ENCODE measurements at regions of chr20 and their contacts with region 1.

Region 1: DNA sequence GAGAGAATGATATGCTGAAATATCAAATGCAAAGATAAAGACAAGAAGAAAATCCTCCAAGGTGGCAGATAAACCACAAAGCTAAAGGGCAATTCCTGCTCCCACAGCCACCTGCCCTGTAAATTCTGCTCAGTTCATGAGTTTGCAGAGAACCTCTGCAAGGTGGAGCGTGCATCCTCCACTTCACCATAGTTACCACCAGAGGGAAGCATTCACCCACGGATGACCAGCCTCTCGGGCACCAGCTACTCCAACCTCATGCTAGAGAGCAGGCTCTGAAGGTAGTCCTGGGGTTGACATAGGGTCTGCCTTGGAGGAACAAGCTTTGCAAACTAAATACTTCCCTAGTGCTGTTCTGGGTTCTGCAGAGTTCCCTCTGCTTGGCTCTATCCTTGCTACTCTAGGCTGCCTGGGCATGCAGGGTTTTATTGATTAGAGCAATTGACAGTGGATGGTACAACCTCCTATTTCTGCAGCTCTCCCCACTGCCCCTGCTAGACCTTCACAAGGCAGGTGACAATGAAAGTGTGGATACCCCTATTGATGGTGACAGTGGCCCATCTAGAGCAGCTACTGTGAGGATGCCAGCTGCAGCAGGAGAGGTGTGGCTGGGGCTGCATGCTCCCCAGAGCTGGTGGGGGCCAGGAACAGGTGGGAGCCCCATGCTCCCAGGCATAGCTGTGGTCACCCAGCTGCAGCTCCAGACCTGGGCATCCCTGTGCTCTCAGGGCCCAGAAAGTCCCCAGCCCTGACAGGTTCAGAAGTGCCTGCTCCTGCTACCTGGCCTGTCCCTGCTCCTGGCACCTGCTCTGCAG is 51.1 kb downstream of the GGTLC1 start:
- DNase-seq: peak; percentile 77
- H3K4me3 Mint-ChIP-seq: no peak overlapping the region
- H3K27ac Mint-ChIP-seq: no peak overlapping the region
- H3K4me1 Mint-ChIP-seq: no peaks in the 10 kb centered on the region
- H3K27me3 Mint-ChIP-seq: peaks cover 11% of the 10 kb centered on the region

Region 2: GRCh38 chr20:23955896-23956295 is 18.4 kb after region 1 on chr20:
- CTCF ChIA-PET with region 1: no interaction called
- DNase-seq: no peak
- H3K4me3 Mint-ChIP-seq: no peak overlapping the region
- H3K27ac Mint-ChIP-seq: no peak overlapping the region
- H3K4me1 Mint-ChIP-seq: no peaks in the 10 kb centered on the region
- H3K27me3 Mint-ChIP-seq: peaks cover 22% of the 10 kb centered on the region

Region 3: DNA sequence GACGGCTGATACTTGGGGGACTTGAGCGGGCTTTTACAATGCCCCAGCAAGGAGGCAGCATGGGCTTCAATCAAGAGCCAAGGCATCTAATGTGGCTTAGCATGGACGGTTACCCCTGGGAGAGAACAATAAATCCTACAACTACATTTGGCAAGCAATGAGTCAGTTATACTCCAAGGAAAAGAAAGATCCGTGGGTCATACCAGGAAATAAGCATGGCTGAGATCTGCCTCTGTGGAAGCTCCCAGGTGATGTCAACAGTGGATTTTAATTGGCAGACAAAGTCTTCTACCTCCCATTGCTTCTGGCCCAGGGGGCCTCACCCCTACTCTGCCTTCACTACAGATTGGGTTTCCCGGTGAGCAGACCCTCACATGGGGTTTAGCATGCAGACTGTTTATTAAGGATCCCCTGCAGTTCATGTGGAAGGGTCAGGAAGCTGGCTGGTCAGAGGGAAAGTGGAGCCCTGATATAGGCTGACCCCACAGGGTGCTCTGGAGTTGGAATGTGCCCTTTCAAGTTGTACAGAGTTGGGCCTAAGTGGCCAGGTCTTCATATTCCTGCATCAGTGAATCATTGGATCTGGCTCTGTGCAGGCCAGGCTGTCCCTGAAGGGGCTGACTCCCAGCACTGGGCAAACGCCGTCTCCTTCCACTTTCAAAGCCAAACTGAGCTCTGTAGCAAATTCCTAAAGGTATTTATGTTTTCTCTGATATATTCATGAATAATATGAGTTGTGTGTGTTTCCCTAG is 142.3 kb after region 1 on chr20:
- CTCF ChIA-PET with region 1: no interaction called
- DNase-seq: no peak
- H3K4me3 Mint-ChIP-seq: no peak overlapping the region
- H3K27ac Mint-ChIP-seq: no peak overlapping the region
- H3K4me1 Mint-ChIP-seq: no peaks in the 10 kb centered on the region
- H3K27me3 Mint-ChIP-seq: peaks cover 9% of the 10 kb centered on the region

Region 4: GRCh38 chr20:24164360-24164759 is 226.8 kb after region 1 on chr20:
- CTCF ChIA-PET with region 1: interaction called, 15 read pairs
- DNase-seq: peak; percentile 53
- H3K4me3 Mint-ChIP-seq: no peak overlapping the region
- H3K27ac Mint-ChIP-seq: no peak overlapping the region
- H3K4me1 Mint-ChIP-seq: no peaks in the 10 kb centered on the region
- H3K27me3 Mint-ChIP-seq: no peaks in the 10 kb centered on the region

Region 5: GRCh38 chr20:24781422-24781980 is 844.0 kb after region 1 on chr20:
- CTCF ChIA-PET with region 1: interaction called, 16 read pairs
- DNase-seq: peak; percentile 44
- H3K4me3 Mint-ChIP-seq: no peak overlapping the region
- H3K27ac Mint-ChIP-seq: no peak overlapping the region
- H3K4me1 Mint-ChIP-seq: peaks cover 23% of the 10 kb centered on the region
- H3K27me3 Mint-ChIP-seq: peaks cover 59% of the 10 kb centered on the region